Caco-2 (cell line): ENCODE measurements at regions of chr16 and their contacts with region 1.

Region 1: GRCh38 chr16:90057738-90058173 is 19.4 kb downstream of the PRDM7 start:
- DNase-seq: peak; percentile 44 to 75
- H3K4me3 ChIP-seq: no peak overlapping the region
- H3K4me3 Mint-ChIP-seq: peak overlapping the region; percentile 7
- H3K27ac Mint-ChIP-seq: peak overlapping the region; percentile 77
- H3K4me1 ChIP-seq: peaks cover 25% of the 10 kb centered on the region
- H3K4me1 Mint-ChIP-seq: peaks cover 14% of the 10 kb centered on the region
- H3K27me3 ChIP-seq: no peaks in the 10 kb centered on the region
- H3K27me3 Mint-ChIP-seq: no peaks in the 10 kb centered on the region
- CTCF ChIP-seq: no peak

Region 2: DNA sequence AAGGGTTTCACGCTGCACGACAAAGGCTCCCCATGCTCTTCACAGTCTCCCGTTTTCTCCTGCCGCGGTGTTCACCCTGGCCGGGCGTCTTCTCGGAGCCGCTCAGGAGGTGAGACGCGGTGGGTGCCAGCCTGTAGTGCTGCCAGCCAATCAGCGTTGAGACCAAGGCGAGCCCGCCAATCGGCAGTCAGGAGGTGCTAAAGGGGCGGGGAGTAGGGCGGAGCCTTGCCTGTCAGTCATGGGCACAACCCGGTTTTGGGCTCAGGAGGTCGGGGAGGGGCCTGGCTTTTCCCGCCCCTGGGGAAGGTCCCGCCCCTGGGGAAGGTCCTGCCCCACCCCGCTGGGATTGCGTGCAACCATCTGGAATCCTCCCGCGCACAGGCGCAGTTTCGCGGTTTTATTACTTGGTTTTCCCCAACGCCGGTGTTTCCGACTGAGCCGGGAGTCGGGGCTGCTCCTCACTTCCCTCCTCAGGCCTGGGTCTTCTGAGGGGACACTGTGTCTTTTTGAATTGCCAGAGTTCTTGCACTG is 19.5 kb after region 1 on chr16 and contains the start of gene PRDM7:
- CTCF ChIA-PET with region 1: no interaction called
- POLR2A ChIA-PET with region 1: no interaction called
- intact Hi-C with region 1: loop called (anchors 2 kb)
- DNase-seq: peak; percentile 100
- H3K4me3 ChIP-seq: peak within 1 kb of the TSS; percentile 37
- H3K4me3 Mint-ChIP-seq: peak within 1 kb of the TSS; percentile 94
- H3K27ac Mint-ChIP-seq: peak within 1 kb of the TSS; percentile 98
- H3K4me1 ChIP-seq: peaks cover 3% of the 10 kb centered on the region; the same call in 1 of the 2 replicates
- H3K4me1 Mint-ChIP-seq: peaks cover 10% of the 10 kb centered on the region
- H3K27me3 ChIP-seq: no peaks in the 10 kb centered on the region
- H3K27me3 Mint-ChIP-seq: peaks cover 9% of the 10 kb centered on the region
- CTCF ChIP-seq: no peak
- total RNA-seq, gene PRDM7: not detected in 2 replicates